Heart left ventricle (tissue), 16 donors: ENCODE measurements at regions of chr12 and their contacts with region 1.

Region 1: DNA sequence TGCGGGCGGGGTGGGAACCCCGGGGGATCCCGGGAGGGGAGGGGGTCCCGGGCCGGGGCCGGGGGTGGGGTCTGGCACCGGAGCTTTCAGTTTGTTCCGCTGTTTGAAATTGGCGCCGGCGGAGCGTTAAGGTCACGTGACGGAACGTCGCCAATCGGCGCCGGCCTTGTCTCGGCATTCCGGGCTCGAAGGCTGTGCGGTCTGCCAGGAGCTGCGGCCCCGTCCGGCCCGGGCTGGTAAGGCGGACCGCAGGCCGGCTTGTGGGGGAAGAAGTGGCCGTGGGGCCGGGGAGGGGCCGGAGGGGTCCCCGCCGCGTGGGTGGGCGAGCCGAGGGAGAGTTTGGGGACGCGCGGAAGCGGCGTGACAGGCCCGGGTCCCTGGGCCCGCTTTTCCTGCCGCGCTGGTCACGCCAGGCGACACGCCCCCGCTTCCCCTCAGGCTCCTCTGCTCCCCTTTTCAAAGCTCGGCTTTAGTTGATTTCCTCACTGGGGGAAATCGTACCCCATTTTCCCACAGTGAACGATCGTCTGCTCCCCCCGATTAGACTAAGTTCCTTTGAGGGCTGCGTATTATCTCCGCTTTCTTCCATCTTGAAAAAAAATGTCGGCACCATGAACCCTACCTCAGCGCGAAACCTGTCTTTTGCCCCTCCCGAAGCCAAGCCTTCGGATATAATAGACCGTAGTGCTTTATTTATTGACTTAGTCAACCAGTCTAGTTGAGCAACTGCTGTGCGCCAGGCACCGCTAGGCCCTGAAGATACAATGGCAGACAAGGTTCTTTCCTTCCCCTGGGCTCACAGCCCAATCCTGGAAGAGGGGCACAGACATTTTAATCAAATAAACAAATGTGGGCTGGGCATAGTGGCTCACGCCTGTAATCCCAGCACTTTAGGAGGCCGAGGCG is at the starts of genes FOXM1 and RHNO1:
- DNase-seq: peak; percentile 90 to 95 (median 91)
- ATAC-seq: peak; percentile 84 to 97 (median 96)
- H3K4me3 ChIP-seq: peak within 1 kb of the TSS; percentile 72 to 99 (median 86)
- H3K27ac ChIP-seq: peak within 1 kb of the TSS; percentile 31 to 93 (median 83)
- H3K4me1 ChIP-seq: peaks cover 0 to 33% (median 16%) of the 10 kb centered on the region in 12 donors
- H3K27me3 ChIP-seq: no peaks in the 10 kb centered on the region
- CTCF ChIP-seq: peak in 6 of 12 donors; percentile 8 to 43 (median 31)
- POLR2A ChIP-seq: peak in 1 of 2 donors; percentile 24
- total RNA-seq, gene FOXM1: 0.09 to 13.5 (median 0.68) TPM
- total RNA-seq, gene RHNO1: 3.1 to 15.0 (median 5.7) TPM

Region 2: GRCh38 chr12:2824541-2824940 is 52.8 kb before region 1 on chr12:
- intact Hi-C with region 1: loop called in 1 of 10 experiments (anchors 5 kb)
- DNase-seq: no peak
- ATAC-seq: no peak
- H3K4me3 ChIP-seq: no peak overlapping the region
- H3K27ac ChIP-seq: no peak overlapping the region
- H3K4me1 ChIP-seq: no peaks in the 10 kb centered on the region
- H3K27me3 ChIP-seq: no peaks in the 10 kb centered on the region
- CTCF ChIP-seq: no peak
- POLR2A ChIP-seq: no peak